ENCODE measurements at regions of chr3 and their contacts with region 1.

Region 1: DNA sequence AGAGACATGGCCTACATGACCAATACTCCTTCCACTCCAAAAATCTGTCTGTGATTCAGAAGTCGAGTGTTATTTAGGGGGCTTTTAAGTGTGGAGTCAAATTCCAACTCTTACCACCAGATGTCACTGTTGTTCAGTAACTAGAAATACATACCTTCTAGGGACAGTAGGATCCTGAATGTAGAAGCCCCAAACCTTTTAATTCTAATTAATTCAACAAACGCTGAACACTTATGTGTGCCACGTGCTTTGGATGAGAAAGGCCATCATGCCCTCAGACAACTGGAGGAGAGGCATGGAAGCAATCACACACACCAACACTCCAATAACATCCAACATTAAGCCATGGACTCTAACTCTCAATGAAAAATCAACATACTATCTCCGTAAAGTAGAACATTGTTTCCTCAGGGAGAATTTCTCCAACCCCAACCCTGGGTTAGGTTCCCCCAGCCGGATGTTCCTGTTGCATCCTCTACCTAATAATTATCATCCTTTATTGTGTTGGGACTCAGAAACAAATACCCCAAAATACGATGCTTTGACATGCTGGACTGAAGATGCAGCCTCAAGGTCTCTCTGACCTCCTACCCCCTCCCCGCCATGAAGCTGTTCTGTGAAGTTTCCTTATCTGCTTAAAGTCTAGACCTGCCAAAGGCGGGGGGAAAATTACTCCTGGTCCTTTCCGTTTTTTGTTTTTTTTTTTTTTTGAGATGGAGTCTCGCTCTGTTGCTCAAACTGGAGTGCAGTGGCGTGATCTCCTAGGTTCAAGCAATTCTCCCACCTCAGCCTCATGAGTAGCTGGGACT is 8.0 kb upstream of the CCDC13 start:
- DNase-seq: peak in 3 of 9 experiments; percentile 55 to 84 (median 80)
- ATAC-seq: peak; percentile 92
- H3K4me3 ChIP-seq: no peak overlapping the region
- H3K4me3 Mint-ChIP-seq: no peak overlapping the region
- H3K27ac ChIP-seq: no peak overlapping the region
- H3K27ac Mint-ChIP-seq: no peak overlapping the region
- H3K4me1 ChIP-seq: no peaks in the 10 kb centered on the region
- H3K4me1 Mint-ChIP-seq: peaks cover 2% of the 10 kb centered on the region
- H3K27me3 ChIP-seq: no peaks in the 10 kb centered on the region
- H3K27me3 Mint-ChIP-seq: no peaks in the 10 kb centered on the region
- CTCF ChIP-seq: peak; percentile 80

Region 2: GRCh38 chr3:40985194-40985593 is 1795.9 kb before region 1 on chr3:
- CTCF ChIA-PET with region 1: no interaction called
- POLR2A ChIA-PET with region 1: no interaction called
- intact Hi-C with region 1: no loop called
- DNase-seq: no peak
- ATAC-seq: no peak
- H3K4me3 ChIP-seq: no peak overlapping the region
- H3K4me3 Mint-ChIP-seq: no peak overlapping the region
- H3K27ac ChIP-seq: no peak overlapping the region
- H3K27ac Mint-ChIP-seq: no peak overlapping the region
- H3K4me1 ChIP-seq: no peaks in the 10 kb centered on the region
- H3K4me1 Mint-ChIP-seq: peaks cover 2% of the 10 kb centered on the region
- H3K27me3 ChIP-seq: no peaks in the 10 kb centered on the region
- H3K27me3 Mint-ChIP-seq: peaks cover 15% of the 10 kb centered on the region
- CTCF ChIP-seq: no peak

Region 3: DNA sequence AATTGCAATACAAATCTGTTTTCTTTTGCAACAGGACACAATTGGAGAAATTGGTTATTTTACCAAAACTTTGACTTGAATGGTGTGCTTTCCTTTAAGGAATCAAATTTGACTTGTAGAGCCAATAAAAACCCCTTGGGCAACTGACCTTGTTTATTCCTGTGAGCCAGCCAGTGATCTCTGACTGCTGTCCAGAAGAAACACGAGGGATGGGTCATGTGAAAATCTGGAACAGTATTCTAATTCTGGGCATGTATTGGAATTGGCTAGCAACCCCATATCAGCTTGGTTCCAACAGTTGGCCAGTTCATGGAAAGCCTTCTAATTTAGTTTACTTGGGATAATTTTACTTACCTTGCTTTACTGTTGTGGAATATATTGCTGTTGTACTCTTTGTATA is 59.4 kb before region 1 on chr3:
- CTCF ChIA-PET with region 1: no interaction called
- POLR2A ChIA-PET with region 1: no interaction called
- intact Hi-C with region 1: no loop called
- DNase-seq: no peak
- ATAC-seq: no peak
- H3K4me3 ChIP-seq: no peak overlapping the region
- H3K4me3 Mint-ChIP-seq: no peak overlapping the region
- H3K27ac ChIP-seq: no peak overlapping the region
- H3K27ac Mint-ChIP-seq: no peak overlapping the region
- H3K4me1 ChIP-seq: no peaks in the 10 kb centered on the region
- H3K4me1 Mint-ChIP-seq: no peaks in the 10 kb centered on the region
- H3K27me3 ChIP-seq: no peaks in the 10 kb centered on the region
- H3K27me3 Mint-ChIP-seq: peaks cover 12% of the 10 kb centered on the region
- CTCF ChIP-seq: no peak

Region 4: DNA sequence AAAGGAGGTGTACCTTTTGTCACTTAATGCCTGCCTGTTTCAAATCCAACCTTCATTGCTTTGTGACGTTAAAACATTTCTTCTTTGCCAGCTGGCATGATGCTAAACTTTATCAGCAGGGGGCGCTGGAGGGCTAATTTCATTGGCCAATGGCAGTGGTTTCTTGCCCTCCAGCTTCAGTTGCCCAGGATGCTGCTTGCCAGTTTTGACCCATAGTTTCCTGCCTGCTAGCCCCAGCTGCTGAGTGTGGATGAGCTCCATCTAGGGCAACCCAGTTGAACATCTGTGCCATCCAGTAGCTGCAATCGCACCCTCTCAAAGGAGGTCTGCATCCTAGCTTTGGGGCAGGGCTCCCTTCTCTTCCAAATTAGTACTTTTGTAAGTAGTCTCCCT is 50.2 kb after region 1 on chr3:
- CTCF ChIA-PET with region 1: interaction called, 10 read pairs
- POLR2A ChIA-PET with region 1: no interaction called
- intact Hi-C with region 1: loop called (anchors 2 kb)
- DNase-seq: peak; percentile 43 to 80 (median 76)
- ATAC-seq: peak; percentile 69
- H3K4me3 ChIP-seq: no peak overlapping the region
- H3K4me3 Mint-ChIP-seq: no peak overlapping the region
- H3K27ac ChIP-seq: no peak overlapping the region
- H3K27ac Mint-ChIP-seq: no peak overlapping the region
- H3K4me1 ChIP-seq: peaks cover 4% of the 10 kb centered on the region
- H3K4me1 Mint-ChIP-seq: peaks cover 2% of the 10 kb centered on the region
- H3K27me3 ChIP-seq: no peaks in the 10 kb centered on the region
- H3K27me3 Mint-ChIP-seq: peaks cover 23% of the 10 kb centered on the region
- CTCF ChIP-seq: peak; percentile 76

Region 5: GRCh38 chr3:42839616-42840015 is 58.5 kb after region 1 on chr3:
- CTCF ChIA-PET with region 1: interaction called, 32 read pairs
- POLR2A ChIA-PET with region 1: no interaction called
- intact Hi-C with region 1: loop called (anchors 1 kb)
- DNase-seq: peak in 5 of 9 experiments; percentile 30 to 69 (median 32)
- ATAC-seq: peak; percentile 98
- H3K4me3 ChIP-seq: no peak overlapping the region
- H3K4me3 Mint-ChIP-seq: no peak overlapping the region
- H3K27ac ChIP-seq: no peak overlapping the region
- H3K27ac Mint-ChIP-seq: no peak overlapping the region
- H3K4me1 ChIP-seq: no peaks in the 10 kb centered on the region
- H3K4me1 Mint-ChIP-seq: peaks cover 4% of the 10 kb centered on the region
- H3K27me3 ChIP-seq: no peaks in the 10 kb centered on the region
- H3K27me3 Mint-ChIP-seq: peaks cover 7% of the 10 kb centered on the region
- CTCF ChIP-seq: peak; percentile 64

Region 6: GRCh38 chr3:42880601-42881451 is 99.7 kb after region 1 on chr3:
- CTCF ChIA-PET with region 1: interaction called, 26 read pairs
- POLR2A ChIA-PET with region 1: interaction called, 3 read pairs
- intact Hi-C with region 1: loop called (anchors 1 kb)
- DNase-seq: peak; percentile 65 to 95 (median 86)
- ATAC-seq: peak; percentile 99
- H3K4me3 ChIP-seq: peak overlapping the region; percentile 75 to 77
- H3K4me3 Mint-ChIP-seq: peak overlapping the region; percentile 84
- H3K27ac ChIP-seq: peak overlapping the region; percentile 37 to 59
- H3K27ac Mint-ChIP-seq: peak overlapping the region; percentile 86
- H3K4me1 ChIP-seq: peaks cover 15% of the 10 kb centered on the region
- H3K4me1 Mint-ChIP-seq: peaks cover 11% of the 10 kb centered on the region
- H3K27me3 ChIP-seq: no peaks in the 10 kb centered on the region
- H3K27me3 Mint-ChIP-seq: no peaks in the 10 kb centered on the region
- CTCF ChIP-seq: peak; percentile 86

Measured in CD8-positive, alpha-beta T cell (primary cell).